ENCODE measurements at regions of chr15 and their contacts with region 1.

Region 1: DNA sequence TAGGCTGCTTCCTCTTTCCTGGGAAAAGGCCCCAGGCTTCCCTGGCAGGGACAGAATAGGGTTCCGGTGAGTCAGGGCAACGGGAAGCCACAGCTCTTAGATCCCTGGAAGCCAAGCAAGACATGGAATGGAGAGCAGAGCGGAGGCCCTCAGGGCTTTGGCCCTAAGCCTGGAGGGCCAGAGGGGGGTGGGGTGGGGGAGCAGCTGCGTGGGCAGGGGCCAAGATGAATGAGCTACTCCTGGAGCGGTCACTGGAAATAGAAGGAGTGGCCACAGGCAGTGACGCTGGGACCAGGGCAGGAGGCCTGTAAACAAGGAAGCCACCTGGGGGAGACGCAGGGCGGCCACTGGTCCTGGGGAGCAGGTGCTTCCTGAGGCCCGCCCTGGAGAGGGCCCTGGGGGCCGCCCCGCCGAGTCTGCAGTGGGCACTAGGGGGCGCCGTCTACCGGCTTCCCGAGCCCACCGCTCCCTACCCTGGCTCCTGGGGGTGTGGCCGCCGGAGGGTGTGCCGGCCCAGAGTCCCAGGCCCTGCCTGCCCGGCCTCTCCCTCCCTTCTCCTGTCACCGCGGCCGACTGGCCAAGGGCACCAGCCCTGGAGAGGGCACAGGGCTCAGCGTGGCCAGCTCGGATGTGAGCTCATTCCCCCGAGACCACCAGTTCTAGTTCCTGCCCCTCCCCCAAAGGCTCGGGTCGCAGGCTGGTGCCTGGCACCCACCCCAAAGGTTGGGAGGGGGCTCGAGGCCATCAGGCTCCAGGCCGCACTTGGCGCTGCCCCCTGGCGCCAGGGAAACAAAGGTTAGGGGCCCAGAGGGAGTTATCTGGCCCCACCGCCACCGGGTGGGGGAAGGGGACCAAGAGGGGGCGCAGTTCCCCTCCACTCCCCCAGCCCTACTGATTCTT is 12.1 kb downstream of the VPS18 start:
- DNase-seq: peak; percentile 75 to 95 (median 91)
- ATAC-seq: peak; percentile 89
- H3K4me3 ChIP-seq: peak overlapping the region; percentile 34
- H3K27ac ChIP-seq: peak overlapping the region; percentile 89 to 90
- H3K4me1 ChIP-seq: peaks cover 33 to 93% of the 10 kb centered on the region in 2 donors
- H3K27me3 ChIP-seq: no peaks in the 10 kb centered on the region
- CTCF ChIP-seq: peak; percentile 89 to 94

Region 2: DNA sequence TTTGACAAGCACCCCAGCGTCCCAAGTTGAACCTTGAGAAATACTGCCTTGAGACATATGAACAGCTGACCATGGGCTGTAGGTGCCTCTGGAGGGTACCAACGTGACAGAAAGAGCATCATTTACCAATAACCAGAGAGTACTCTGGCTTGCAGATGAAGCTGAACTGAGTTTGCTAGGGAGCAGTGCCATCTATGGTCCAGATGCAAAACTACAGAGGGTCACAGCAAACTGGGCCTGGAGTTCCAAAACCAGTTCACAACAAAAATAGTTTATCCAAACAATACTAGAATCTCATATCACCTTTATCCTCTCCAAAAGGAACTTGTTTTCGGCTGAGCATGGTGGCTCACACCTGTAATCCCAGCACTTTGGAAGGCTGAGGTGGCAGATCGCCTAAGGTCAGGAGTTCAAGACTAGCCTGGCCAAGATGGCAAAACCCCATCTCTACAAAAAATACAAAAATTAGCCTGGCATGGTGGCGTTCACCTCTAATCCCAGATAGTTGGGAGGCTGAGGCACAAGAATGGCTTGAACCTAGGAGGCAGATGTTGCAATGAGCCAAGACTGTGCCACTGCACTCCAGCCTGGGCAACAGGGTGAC is 116.2 kb after region 1 on chr15:
- intact Hi-C with region 1: loop called in 1 of 2 experiments (anchors 5 kb)
- DNase-seq: peak in 1 of 4 donors; percentile 70
- ATAC-seq: peak; percentile 50
- H3K4me3 ChIP-seq: no peak overlapping the region
- H3K27ac ChIP-seq: no peak overlapping the region
- H3K4me1 ChIP-seq: peaks cover 22 to 36% of the 10 kb centered on the region in 2 donors
- H3K27me3 ChIP-seq: no peaks in the 10 kb centered on the region
- CTCF ChIP-seq: peak; percentile 59 to 61

Region 3: DNA sequence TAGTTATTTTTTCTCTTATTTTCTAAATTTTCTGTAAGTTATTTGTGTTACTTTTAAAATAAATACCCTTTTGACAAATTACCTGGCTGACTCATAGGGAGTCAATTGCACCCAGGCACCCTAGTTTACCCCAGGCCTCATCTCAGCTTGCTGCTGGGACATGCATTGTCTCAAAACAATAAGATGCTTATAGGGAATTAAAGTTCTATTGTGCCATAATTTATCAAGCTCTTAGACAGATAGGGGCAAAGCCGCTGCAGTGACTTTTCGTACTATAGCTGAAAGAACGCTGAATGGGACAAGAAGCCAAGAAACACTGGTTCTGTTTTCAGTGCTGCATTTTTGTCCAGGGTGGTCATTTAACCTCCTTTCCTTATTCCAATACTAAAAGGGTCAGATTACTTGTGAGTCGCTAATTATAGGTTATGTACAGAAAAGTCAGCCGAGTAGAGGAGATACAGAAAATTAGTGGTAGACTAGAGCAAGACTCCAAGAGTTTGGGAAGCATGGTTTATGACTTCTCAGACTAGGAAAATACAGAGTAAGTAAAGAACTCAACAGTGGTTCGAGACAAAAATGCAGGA is 274.0 kb after region 1 on chr15:
- intact Hi-C with region 1: loop called in 1 of 2 experiments (anchors 5 kb)
- DNase-seq: no peak
- ATAC-seq: no peak
- H3K4me3 ChIP-seq: no peak overlapping the region
- H3K27ac ChIP-seq: no peak overlapping the region
- H3K4me1 ChIP-seq: no peaks in the 10 kb centered on the region
- H3K27me3 ChIP-seq: no peaks in the 10 kb centered on the region
- CTCF ChIP-seq: no peak